CD8-positive, alpha-beta T cell (primary cell): ENCODE measurements at regions of chr5 and their contacts with region 1.

Region 1: GRCh38 chr5:2017540-2018389 is 135.0 kb upstream of the IRX4 start:
- DNase-seq: peak in 3 of 9 experiments; percentile 19 to 44 (median 36)
- ATAC-seq: no peak
- H3K4me3 ChIP-seq: no peak overlapping the region
- H3K4me3 Mint-ChIP-seq: no peak overlapping the region
- H3K27ac ChIP-seq: no peak overlapping the region
- H3K27ac Mint-ChIP-seq: no peak overlapping the region
- H3K4me1 ChIP-seq: no peaks in the 10 kb centered on the region
- H3K4me1 Mint-ChIP-seq: no peaks in the 10 kb centered on the region
- H3K27me3 ChIP-seq: no peaks in the 10 kb centered on the region
- H3K27me3 Mint-ChIP-seq: peaks cover 11% of the 10 kb centered on the region
- CTCF ChIP-seq: peak; percentile 55

Region 2: DNA sequence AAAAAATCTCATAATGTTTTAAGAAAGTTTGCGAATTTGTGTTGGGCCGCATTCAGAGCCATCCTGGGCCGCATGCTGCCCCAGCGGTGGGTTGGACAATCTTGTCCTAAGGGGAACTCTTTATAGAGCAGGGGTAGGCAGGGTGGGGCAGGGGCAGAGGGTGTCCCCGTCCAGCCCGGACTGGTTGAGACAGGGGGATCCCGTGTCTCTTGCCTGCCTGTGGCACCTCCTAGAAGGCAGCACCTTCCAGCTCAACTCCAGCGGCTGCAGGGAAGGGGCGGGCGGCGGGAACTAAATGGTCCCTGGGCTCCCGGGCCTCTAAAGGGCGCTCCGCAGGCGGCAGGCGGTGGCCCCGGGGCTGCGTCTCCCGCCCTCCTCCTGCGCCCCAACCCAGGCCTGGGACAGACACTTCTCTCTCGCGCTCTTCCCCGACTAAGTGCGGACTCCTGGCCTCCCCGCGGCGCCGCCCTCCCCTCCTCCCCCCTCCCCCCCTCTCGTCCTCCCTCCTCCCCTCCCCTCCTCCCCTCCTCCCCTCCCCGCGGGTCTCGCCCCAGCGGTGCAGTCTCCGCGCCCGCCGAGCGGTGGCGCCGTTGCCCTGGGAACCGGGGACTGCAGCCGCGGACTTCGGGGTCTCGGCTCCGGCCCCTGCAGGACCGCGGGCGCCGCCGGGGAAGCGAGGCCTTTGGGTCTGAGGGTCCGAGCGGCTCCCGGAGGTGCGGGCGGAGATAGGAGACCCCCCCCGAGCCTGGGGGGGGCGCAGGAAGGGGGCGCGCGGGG is 350.8 kb before region 1 on chr5:
- CTCF ChIA-PET with region 1: no interaction called
- POLR2A ChIA-PET with region 1: no interaction called
- intact Hi-C with region 1: loop called in 1 of 2 experiments (anchors 2 kb)
- DNase-seq: peak in 8 of 9 experiments; percentile 26 to 67 (median 52)
- ATAC-seq: peak; percentile 74
- H3K4me3 ChIP-seq: no peak overlapping the region
- H3K4me3 Mint-ChIP-seq: peak overlapping the region; percentile 35
- H3K27ac ChIP-seq: no peak overlapping the region
- H3K27ac Mint-ChIP-seq: no peak overlapping the region
- H3K4me1 ChIP-seq: peaks cover 12% of the 10 kb centered on the region
- H3K4me1 Mint-ChIP-seq: peaks cover 20% of the 10 kb centered on the region
- H3K27me3 ChIP-seq: peaks cover 13 to 31% of the 10 kb centered on the region in 2 experiments
- H3K27me3 Mint-ChIP-seq: peaks cover 61% of the 10 kb centered on the region
- CTCF ChIP-seq: peak; percentile 38

Region 3: DNA sequence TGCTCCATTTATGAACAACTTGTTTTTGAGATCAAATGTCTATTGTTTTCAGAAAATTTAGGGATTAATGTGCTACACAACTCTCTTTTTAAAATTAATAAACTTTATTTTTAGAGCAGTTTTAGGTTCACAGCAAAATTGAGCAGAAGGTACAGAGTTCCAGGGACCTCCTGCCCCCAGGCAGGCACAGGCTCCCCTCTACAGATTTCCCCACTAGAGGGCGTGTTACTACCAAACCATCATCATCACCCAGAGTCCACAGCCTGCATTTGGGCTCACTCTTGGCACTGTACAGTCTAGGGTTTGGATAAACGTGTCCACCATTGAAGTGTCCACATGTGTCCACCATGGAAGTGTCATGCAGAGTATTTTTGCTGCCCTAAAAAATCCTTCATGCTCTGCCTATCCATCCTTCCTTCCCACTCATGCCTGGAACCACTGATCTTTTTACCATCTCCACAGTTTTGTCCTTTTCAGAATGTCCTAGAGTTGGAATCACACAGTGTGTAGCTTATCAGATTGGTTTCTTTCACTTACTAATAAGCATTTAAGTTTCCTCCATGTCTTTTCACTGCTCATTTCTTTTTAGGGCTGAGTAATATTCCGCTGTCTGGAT is 279.9 kb before region 1 on chr5:
- CTCF ChIA-PET with region 1: interaction called, 4 read pairs
- POLR2A ChIA-PET with region 1: no interaction called
- intact Hi-C with region 1: loop called in 1 of 2 experiments (anchors 5 kb)
- DNase-seq: peak in 8 of 9 experiments; percentile 30 to 67 (median 53)
- ATAC-seq: peak; percentile 65
- H3K4me3 ChIP-seq: no peak overlapping the region
- H3K4me3 Mint-ChIP-seq: no peak overlapping the region
- H3K27ac ChIP-seq: no peak overlapping the region
- H3K27ac Mint-ChIP-seq: no peak overlapping the region
- H3K4me1 ChIP-seq: no peaks in the 10 kb centered on the region
- H3K4me1 Mint-ChIP-seq: no peaks in the 10 kb centered on the region
- H3K27me3 ChIP-seq: no peaks in the 10 kb centered on the region
- H3K27me3 Mint-ChIP-seq: peaks cover 6% of the 10 kb centered on the region
- CTCF ChIP-seq: peak; percentile 74

Region 4: GRCh38 chr5:1763548-1763911 is 254.2 kb before region 1 on chr5:
- CTCF ChIA-PET with region 1: interaction called, 3 read pairs
- POLR2A ChIA-PET with region 1: no interaction called
- intact Hi-C with region 1: loop called in 1 of 2 experiments (anchors 5 kb)
- DNase-seq: peak in 6 of 9 experiments; percentile 17 to 61 (median 48)
- ATAC-seq: no peak
- H3K4me3 ChIP-seq: no peak overlapping the region
- H3K4me3 Mint-ChIP-seq: no peak overlapping the region
- H3K27ac ChIP-seq: no peak overlapping the region
- H3K27ac Mint-ChIP-seq: no peak overlapping the region
- H3K4me1 ChIP-seq: no peaks in the 10 kb centered on the region
- H3K4me1 Mint-ChIP-seq: no peaks in the 10 kb centered on the region
- H3K27me3 ChIP-seq: no peaks in the 10 kb centered on the region
- H3K27me3 Mint-ChIP-seq: peaks cover 14% of the 10 kb centered on the region
- CTCF ChIP-seq: peak; percentile 58